ENCODE measurements at regions of chr2 and their contacts with region 1.

Region 1: GRCh38 chr2:70301344-70302194 is at the start of gene FAM136A:
- DNase-seq: peak; percentile 81 to 93 (median 88)
- ATAC-seq: peak; percentile 98
- H3K4me3 ChIP-seq: peak within 1 kb of the TSS; percentile 83
- H3K4me3 Mint-ChIP-seq: peak within 1 kb of the TSS; percentile 87 to 97 (median 92)
- H3K27ac ChIP-seq: peak within 1 kb of the TSS; percentile 81
- H3K27ac Mint-ChIP-seq: peak within 1 kb of the TSS; percentile 84 to 94 (median 90)
- H3K4me1 ChIP-seq: peaks cover 6 to 7% of the 10 kb centered on the region in 2 donors
- H3K4me1 Mint-ChIP-seq: peaks cover 10 to 40% (median 27%) of the 10 kb centered on the region in 7 donors
- H3K27me3 ChIP-seq: no peaks in the 10 kb centered on the region
- H3K27me3 Mint-ChIP-seq: no peaks in the 10 kb centered on the region
- total RNA-seq, gene FAM136A: 16.2 to 40.9 (median 28.2) TPM

Region 2: DNA sequence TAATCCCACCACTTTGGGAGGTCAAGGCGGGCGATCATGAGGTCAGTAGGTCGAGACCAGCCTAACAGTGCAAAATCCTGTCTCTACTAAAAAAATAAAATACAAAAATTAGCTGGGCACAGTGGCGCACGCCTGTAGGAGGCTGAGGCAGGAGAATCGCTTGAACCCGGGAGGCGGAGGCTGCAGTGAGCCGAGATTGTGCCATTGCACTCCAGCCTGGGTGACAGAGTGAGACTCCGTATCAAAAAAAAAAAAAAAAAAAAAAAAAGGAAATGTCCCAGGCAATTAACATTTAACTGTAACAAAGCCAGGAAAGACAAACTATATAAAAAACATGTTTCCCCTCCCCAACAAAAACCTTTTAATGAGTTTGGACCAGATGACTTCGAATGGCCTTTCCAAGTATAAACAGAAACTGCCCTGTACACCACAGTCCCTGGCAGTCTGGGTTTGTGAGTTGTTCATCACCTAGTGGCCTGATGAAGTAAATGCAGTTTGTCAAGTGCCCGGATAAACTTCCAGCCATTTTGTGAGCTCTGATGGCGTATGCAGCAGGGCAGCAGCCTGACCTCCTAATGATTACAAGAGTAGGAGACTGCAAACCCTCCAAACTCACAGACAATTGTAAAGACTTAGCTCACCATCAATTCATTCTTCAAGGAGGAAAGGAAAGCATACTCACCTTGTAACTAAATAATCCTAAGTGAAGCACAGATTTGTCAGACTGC is 230.9 kb before region 1 on chr2:
- CTCF ChIA-PET with region 1: no interaction called
- POLR2A ChIA-PET with region 1: no interaction called
- intact Hi-C with region 1: loop called in 1 of 2 experiments (anchors 5 kb)
- DNase-seq: peak in 8 of 9 donors; percentile 49 to 80 (median 70)
- ATAC-seq: peak; percentile 85
- H3K4me3 ChIP-seq: peak overlapping the region; percentile 48
- H3K4me3 Mint-ChIP-seq: peak overlapping the region; percentile 56 to 91 (median 80)
- H3K27ac ChIP-seq: peak overlapping the region; percentile 71
- H3K27ac Mint-ChIP-seq: peak overlapping the region; percentile 89 to 99 (median 95)
- H3K4me1 ChIP-seq: peaks cover 35 to 36% of the 10 kb centered on the region in 2 donors
- H3K4me1 Mint-ChIP-seq: peaks cover 19 to 72% (median 63%) of the 10 kb centered on the region in 7 donors
- H3K27me3 ChIP-seq: no peaks in the 10 kb centered on the region
- H3K27me3 Mint-ChIP-seq: no peaks in the 10 kb centered on the region

Region 3: DNA sequence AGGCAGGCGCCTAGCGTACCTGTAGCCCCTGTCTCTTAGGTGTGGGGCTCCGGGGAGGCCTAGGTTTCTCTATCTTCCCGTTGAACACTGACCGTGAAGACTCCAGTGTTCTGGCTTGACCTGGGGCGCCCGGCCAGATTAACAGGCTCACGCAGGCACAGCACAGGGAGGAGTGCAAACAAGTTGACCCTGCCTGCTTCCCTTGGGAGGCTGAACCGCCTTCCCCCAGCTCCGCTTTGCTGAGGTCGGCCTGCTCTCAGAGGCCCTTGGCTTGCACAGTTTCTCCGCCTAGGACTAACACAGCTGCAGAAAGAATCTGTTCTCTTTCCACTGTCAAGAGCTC is 43.1 kb before region 1 on chr2:
- CTCF ChIA-PET with region 1: interaction called, 8 read pairs
- POLR2A ChIA-PET with region 1: interaction called, 3 read pairs
- intact Hi-C with region 1: loop called (anchors 1 to 2 kb)
- DNase-seq: peak in 2 of 9 donors; percentile 7 to 16
- ATAC-seq: no peak
- H3K4me3 ChIP-seq: peak overlapping the region; percentile 56
- H3K4me3 Mint-ChIP-seq: peak overlapping the region; percentile 88 to 96 (median 92)
- H3K27ac ChIP-seq: peak overlapping the region; percentile 71
- H3K27ac Mint-ChIP-seq: peak overlapping the region; percentile 58 to 93 (median 86)
- H3K4me1 ChIP-seq: peaks cover 7 to 21% of the 10 kb centered on the region in 2 donors
- H3K4me1 Mint-ChIP-seq: peaks cover 19 to 50% (median 46%) of the 10 kb centered on the region in 7 donors
- H3K27me3 ChIP-seq: no peaks in the 10 kb centered on the region
- H3K27me3 Mint-ChIP-seq: no peaks in the 10 kb centered on the region

Region 4: DNA sequence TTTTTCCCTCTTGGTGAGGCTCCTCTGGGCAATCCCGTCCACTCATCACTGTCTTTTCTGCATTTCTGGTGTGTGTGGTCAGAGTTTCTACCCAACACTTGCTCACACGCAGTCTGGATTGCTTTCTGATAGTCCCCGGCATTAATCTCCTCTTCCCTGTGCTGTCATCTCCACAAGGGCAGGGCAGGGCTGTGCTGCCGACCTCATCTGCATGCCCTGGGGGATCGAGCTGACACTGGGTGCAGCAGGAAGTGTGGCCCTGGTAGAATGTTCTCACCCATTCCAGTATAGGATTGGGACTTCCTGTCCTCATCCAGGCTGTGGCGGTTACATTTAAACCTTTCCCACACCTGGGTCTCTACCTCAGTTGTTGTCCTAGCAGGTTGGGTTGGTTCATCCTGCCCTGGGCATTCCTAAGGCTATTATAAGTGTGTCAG is 80.3 kb after region 1 on chr2:
- CTCF ChIA-PET with region 1: no interaction called
- POLR2A ChIA-PET with region 1: no interaction called
- intact Hi-C with region 1: no loop called
- DNase-seq: no peak
- ATAC-seq: no peak
- H3K4me3 ChIP-seq: no peak overlapping the region
- H3K4me3 Mint-ChIP-seq: no peak overlapping the region
- H3K27ac ChIP-seq: no peak overlapping the region
- H3K27ac Mint-ChIP-seq: no peak overlapping the region
- H3K4me1 ChIP-seq: no peaks in the 10 kb centered on the region
- H3K4me1 Mint-ChIP-seq: peaks cover 0 to 7% (median 0%) of the 10 kb centered on the region in 7 donors
- H3K27me3 ChIP-seq: no peaks in the 10 kb centered on the region
- H3K27me3 Mint-ChIP-seq: peaks cover 0 to 16% (median 0%) of the 10 kb centered on the region in 5 donors

Region 5: DNA sequence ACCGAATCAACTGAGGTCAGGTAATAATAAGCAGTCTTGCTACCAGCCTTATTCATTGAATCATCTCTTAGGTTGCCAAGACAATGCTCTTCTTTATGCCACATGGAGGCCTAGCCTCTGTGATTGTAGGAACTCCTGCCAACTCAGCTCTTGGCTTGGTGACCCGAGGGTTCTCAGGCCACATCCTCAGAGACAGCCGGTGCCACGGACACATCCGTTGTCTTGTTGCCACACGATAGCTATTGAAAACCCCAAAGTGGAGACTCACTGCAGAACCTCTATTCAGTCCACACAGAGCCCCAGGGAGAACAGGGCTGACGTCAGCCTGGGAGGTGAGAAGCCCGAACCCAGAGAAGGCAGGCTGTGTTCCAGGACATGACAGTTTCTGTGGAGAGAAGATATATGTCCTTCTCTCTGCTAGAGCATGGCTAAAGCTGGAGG is 305.6 kb after region 1 on chr2:
- CTCF ChIA-PET with region 1: no interaction called
- POLR2A ChIA-PET with region 1: no interaction called
- intact Hi-C with region 1: no loop called
- DNase-seq: no peak
- ATAC-seq: no peak
- H3K4me3 ChIP-seq: no peak overlapping the region
- H3K4me3 Mint-ChIP-seq: no peak overlapping the region
- H3K27ac ChIP-seq: no peak overlapping the region
- H3K27ac Mint-ChIP-seq: no peak overlapping the region
- H3K4me1 ChIP-seq: no peaks in the 10 kb centered on the region
- H3K4me1 Mint-ChIP-seq: peaks cover 2 to 20% (median 13%) of the 10 kb centered on the region in 7 donors
- H3K27me3 ChIP-seq: no peaks in the 10 kb centered on the region
- H3K27me3 Mint-ChIP-seq: peaks cover 0 to 23% (median 6%) of the 10 kb centered on the region in 5 donors

Region 6: GRCh38 chr2:70647873-70648481 is 346.4 kb after region 1 on chr2:
- CTCF ChIA-PET with region 1: interaction called, 106 read pairs
- POLR2A ChIA-PET with region 1: interaction called, 3 read pairs
- intact Hi-C with region 1: loop called (anchors 1 kb)
- DNase-seq: peak; percentile 55 to 81 (median 75)
- ATAC-seq: peak; percentile 85
- H3K4me3 ChIP-seq: no peak overlapping the region
- H3K4me3 Mint-ChIP-seq: no peak overlapping the region
- H3K27ac ChIP-seq: no peak overlapping the region
- H3K27ac Mint-ChIP-seq: peak overlapping the region in 1 of 9 donors; percentile 13
- H3K4me1 ChIP-seq: no peaks in the 10 kb centered on the region
- H3K4me1 Mint-ChIP-seq: no peaks in the 10 kb centered on the region
- H3K27me3 ChIP-seq: no peaks in the 10 kb centered on the region
- H3K27me3 Mint-ChIP-seq: peaks cover 0 to 30% (median 4%) of the 10 kb centered on the region in 5 donors

Region 7: GRCh38 chr2:70861777-70862625 is 560.4 kb after region 1 on chr2:
- CTCF ChIA-PET with region 1: interaction called, 5 read pairs
- POLR2A ChIA-PET with region 1: no interaction called
- intact Hi-C with region 1: loop called in 1 of 2 experiments (anchors 10 kb)
- DNase-seq: peak; percentile 45 to 80 (median 66)
- ATAC-seq: peak; percentile 94
- H3K4me3 ChIP-seq: no peak overlapping the region
- H3K4me3 Mint-ChIP-seq: peak overlapping the region in 3 of 10 donors; percentile 24 to 57 (median 49)
- H3K27ac ChIP-seq: no peak overlapping the region
- H3K27ac Mint-ChIP-seq: no peak overlapping the region
- H3K4me1 ChIP-seq: no peaks in the 10 kb centered on the region
- H3K4me1 Mint-ChIP-seq: peaks cover 0 to 6% (median 4%) of the 10 kb centered on the region in 7 donors
- H3K27me3 ChIP-seq: no peaks in the 10 kb centered on the region
- H3K27me3 Mint-ChIP-seq: peaks cover 22 to 54% (median 29%) of the 10 kb centered on the region in 5 donors

Region 8: DNA sequence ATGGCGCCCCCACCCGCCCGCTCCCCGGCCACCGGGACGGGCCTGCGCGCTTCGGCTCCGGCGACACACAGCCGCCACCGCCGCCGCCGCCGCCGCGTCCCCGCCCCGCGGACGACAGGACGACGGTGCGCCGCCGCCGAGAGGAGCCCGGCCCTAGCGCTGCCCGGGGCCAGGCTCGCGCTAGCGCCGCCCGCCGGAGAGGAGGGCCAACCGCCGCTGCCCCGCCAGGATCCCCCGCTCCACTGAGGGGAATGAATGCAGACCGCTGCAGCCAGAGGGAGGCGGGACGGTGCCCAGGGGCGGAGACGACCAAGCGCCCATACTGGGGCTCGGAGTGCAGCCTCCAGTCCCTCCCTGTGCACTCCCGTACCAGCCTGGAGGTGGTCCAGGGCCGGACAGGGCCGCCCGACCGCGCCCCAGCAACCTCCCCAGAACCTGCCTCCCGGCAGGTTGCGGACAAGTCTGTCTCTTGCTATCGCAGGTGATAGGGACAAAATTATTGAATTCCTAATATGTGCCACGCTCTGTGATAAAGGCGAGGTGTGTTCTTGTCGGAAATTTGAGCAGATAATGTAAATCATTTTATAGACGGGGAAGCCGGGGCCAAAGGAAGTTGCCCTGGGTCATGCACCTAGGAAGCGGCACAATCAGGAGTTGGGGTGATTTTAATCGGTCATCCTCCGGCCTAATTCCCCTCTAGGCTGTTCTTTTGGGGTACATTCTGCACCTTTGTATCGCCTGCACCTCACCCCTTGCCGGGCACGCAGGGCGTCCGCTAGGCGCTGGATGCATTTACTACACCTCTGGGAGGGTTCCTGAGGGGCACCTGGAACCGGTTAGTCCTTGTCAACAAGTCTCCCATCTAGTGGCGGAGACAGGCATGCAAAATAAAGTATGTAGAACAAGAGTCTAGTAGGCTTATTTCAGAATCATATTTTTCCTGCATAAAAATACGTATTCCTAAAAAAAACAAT is 693.5 kb after region 1 on chr2 and contains the start of gene TEX261:
- CTCF ChIA-PET with region 1: no interaction called
- POLR2A ChIA-PET with region 1: no interaction called
- intact Hi-C with region 1: loop called (anchors 1 to 10 kb)
- DNase-seq: peak; percentile 81 to 97 (median 88)
- ATAC-seq: peak; percentile 98
- H3K4me3 ChIP-seq: peak within 1 kb of the TSS; percentile 92
- H3K4me3 Mint-ChIP-seq: peak within 1 kb of the TSS; percentile 95 to 100 (median 98)
- H3K27ac ChIP-seq: peak within 1 kb of the TSS; percentile 88
- H3K27ac Mint-ChIP-seq: peak within 1 kb of the TSS; percentile 88 to 99 (median 96)
- H3K4me1 ChIP-seq: peaks cover 19 to 21% of the 10 kb centered on the region in 2 donors
- H3K4me1 Mint-ChIP-seq: peaks cover 23 to 44% (median 36%) of the 10 kb centered on the region in 7 donors
- H3K27me3 ChIP-seq: no peaks in the 10 kb centered on the region
- H3K27me3 Mint-ChIP-seq: no peaks in the 10 kb centered on the region
- total RNA-seq, gene TEX261: 33.2 to 66.3 (median 56.4) TPM